CD14-positive monocyte (primary cell): ENCODE measurements at regions of chr20 and their contacts with region 1.

Region 1: GRCh38 chr20:1619861-1620444 is at the start of gene SIRPB1:
- DNase-seq: peak; percentile 75 to 84 (median 82)
- H3K4me3 ChIP-seq: peak within 1 kb of the TSS; percentile 43 to 80 (median 65)
- H3K4me3 Mint-ChIP-seq: peak within 1 kb of the TSS; percentile 85 to 94
- H3K27ac ChIP-seq: peak within 1 kb of the TSS; percentile 87 to 91
- H3K27ac Mint-ChIP-seq: peak within 1 kb of the TSS; percentile 92 to 98 (median 96)
- H3K4me1 ChIP-seq: peaks cover 82 to 100% of the 10 kb centered on the region in 2 donors
- H3K4me1 Mint-ChIP-seq: peaks cover 92% of the 10 kb centered on the region
- H3K27me3 ChIP-seq: no peaks in the 10 kb centered on the region
- H3K27me3 Mint-ChIP-seq: no peaks in the 10 kb centered on the region
- CTCF ChIP-seq: no peak
- polyA plus RNA-seq, gene SIRPB1: 132 to 437 (median 137) TPM

Region 2: GRCh38 chr20:1567392-1568162 is 52.4 kb before region 1 on chr20:
- intact Hi-C with region 1: loop called in 1 of 2 experiments (anchors 5 kb)
- DNase-seq: peak; percentile 10 to 70 (median 34)
- H3K4me3 ChIP-seq: peak overlapping the region in 1 of 3 experiments; percentile 50
- H3K4me3 Mint-ChIP-seq: peak overlapping the region; percentile 16 to 64
- H3K27ac ChIP-seq: peak overlapping the region; percentile 70 to 89
- H3K27ac Mint-ChIP-seq: peak overlapping the region; percentile 92 to 99 (median 98)
- H3K4me1 ChIP-seq: peaks cover 76 to 78% of the 10 kb centered on the region in 2 donors
- H3K4me1 Mint-ChIP-seq: peaks cover 79% of the 10 kb centered on the region
- H3K27me3 ChIP-seq: no peaks in the 10 kb centered on the region
- H3K27me3 Mint-ChIP-seq: peaks cover 0 to 3% (median 2%) of the 10 kb centered on the region in 3 donors
- CTCF ChIP-seq: no peak

Region 3: DNA sequence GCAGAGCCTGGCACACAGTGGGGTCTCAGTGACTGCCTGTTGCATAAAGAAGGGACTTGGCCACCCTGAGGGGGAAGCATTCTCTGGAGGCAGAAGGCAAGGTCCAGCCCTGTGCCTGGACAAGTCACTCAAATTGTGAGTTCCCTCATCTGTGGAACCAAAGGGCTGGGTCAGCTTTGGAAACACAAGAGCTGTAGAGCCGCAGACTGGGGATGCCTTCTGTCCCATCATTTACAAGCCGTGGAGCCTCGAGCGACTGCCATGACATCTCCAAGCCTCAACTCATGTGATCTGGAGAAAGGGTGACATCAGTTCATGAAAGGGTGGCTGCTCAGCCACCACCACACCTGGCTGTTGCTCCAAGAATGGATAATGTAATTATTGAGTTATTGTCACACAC is 42.0 kb before region 1 on chr20:
- intact Hi-C with region 1: loop called in 1 of 2 experiments (anchors 2 kb)
- DNase-seq: no peak
- H3K4me3 ChIP-seq: no peak overlapping the region
- H3K4me3 Mint-ChIP-seq: no peak overlapping the region
- H3K27ac ChIP-seq: peak overlapping the region; percentile 51 to 63
- H3K27ac Mint-ChIP-seq: peak overlapping the region; percentile 70 to 89 (median 83)
- H3K4me1 ChIP-seq: peaks cover 17 to 29% of the 10 kb centered on the region in 2 donors
- H3K4me1 Mint-ChIP-seq: peaks cover 39% of the 10 kb centered on the region
- H3K27me3 ChIP-seq: no peaks in the 10 kb centered on the region
- H3K27me3 Mint-ChIP-seq: no peaks in the 10 kb centered on the region
- CTCF ChIP-seq: no peak